Head of caudate nucleus (tissue), 42 donors: ENCODE measurements at regions of chr3 and their contacts with region 1.

Region 1: GRCh38 chr3:161423911-161424522 is 52.7 kb upstream of the SPTSSB start:
- DNase-seq: peak in 1 of 42 donors; percentile 35

Region 2: GRCh38 chr3:160707187-160707794 is 716.7 kb before region 1 on chr3:
- intact Hi-C with region 1: loop called (anchors 10 kb)
- DNase-seq: peak in 31 of 42 donors; percentile 8 to 75 (median 53)

Region 3: DNA sequence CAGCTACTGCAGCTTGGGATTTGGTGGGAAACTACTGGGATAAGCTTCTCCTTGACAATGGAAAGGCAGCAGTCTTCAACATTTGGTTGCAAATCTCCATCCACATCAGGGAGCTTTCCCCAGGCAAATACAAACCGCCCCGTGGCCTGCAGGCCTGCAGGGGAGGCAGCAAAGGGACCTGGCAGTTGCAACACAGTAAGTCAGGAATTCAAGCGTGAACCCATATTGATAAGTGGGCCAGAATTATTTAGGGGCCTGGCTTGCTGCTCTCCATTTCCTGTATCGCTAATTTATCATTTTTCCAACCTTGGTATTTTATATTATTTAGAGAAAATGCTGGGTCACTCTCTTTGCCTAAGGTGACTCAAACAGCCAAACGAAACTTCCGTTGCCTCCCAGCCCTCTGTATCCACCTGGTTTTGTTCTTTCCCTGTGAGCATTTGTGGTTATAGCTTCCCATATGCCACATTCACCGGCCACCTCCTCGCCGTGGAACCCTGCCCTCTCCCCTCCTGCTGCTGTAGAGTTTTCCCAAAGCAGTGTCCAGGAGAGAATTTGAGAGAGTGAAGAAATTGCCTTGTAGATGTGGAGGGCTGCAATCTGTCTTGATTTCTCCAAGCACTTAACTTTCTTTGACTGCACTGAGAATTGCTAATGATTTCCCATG is 353.6 kb before region 1 on chr3:
- intact Hi-C with region 1: no loop called
- DNase-seq: no peak

Region 4: GRCh38 chr3:161274719-161275298 is 149.2 kb before region 1 on chr3:
- intact Hi-C with region 1: loop called (anchors 5 kb)
- DNase-seq: peak in 11 of 42 donors; percentile 8 to 61 (median 22)

Region 5: GRCh38 chr3:161349529-161350278 is 74.3 kb before region 1 on chr3:
- intact Hi-C with region 1: no loop called
- DNase-seq: no peak

Region 6: GRCh38 chr3:162200836-162201235 is 776.8 kb after region 1 on chr3:
- intact Hi-C with region 1: no loop called
- DNase-seq: no peak